Activated CD4-positive, alpha-beta memory T cell treated with anti-CD3 and anti-CD28 coated beads for 36 hours (primary cell): ENCODE measurements at regions of chr4 and their contacts with region 1.

Region 1: DNA sequence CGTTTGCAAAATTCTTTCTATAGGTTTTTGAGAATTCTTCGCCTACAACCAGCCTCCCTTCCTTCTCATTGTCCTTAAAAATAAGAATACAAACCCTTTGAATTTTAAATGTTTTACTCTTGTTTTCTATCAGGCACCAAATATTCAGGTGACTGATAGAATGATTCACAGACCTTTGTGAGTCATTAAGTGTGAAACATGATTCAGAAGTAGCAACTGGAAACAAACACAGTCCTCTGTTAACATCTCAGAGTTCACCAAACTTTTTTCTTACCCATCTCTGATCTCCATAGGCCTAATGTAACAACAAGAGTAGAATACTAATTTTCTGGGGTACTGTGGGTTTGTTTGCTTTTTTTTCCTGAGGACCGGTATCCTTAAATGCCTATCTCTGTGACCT is 63.4 kb upstream of the MAB21L2 start:
- DNase-seq: no peak
- H3K4me3 Mint-ChIP-seq: no peak overlapping the region
- H3K27ac Mint-ChIP-seq: no peak overlapping the region
- H3K4me1 Mint-ChIP-seq: peaks cover 17% of the 10 kb centered on the region
- H3K27me3 Mint-ChIP-seq: no peaks in the 10 kb centered on the region

Region 2: DNA sequence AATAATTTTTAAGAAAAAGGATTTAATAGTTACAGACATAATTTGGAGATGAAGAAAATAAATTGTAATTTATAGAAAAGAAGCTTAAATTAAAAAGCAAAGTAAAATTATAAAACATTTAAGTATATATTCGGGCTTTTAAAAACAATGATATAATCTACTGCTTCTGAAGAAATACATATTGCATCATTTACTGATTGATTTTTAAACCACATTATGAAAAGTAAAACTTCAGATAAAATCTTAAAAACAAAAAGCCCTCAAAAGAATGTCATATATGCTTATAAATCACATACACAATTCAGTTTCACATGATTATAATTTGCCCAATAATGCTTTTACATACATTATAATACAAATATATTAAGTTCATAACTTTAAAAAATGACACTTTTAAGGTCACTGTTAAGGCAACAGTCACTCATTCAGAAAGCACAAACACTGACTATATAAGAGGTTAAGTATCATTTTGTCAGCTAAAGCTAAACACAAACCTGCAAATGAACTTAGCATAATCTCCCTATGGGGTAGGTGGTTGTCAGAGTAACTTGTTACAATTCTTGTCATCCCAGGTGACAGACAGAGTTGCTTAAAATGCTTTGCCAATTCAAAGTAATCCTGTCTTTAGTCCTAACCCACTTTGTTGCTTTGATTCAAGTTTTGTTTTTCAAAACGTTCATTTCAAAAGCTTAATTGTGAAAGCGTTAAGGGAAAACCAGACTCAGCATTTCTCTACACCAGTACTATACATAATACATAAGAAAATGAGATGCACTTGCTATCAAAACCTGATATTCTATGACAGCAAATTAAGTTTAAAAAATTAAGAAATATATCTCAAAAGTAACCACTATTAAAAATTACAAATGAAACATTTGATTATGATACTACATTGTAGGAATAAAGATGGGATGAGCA is 27.2 kb before region 1 on chr4:
- CTCF ChIA-PET with region 1: no interaction called
- POLR2A ChIA-PET with region 1: no interaction called
- intact Hi-C with region 1: loop called (anchors 1 kb)
- DNase-seq: no peak
- H3K4me3 Mint-ChIP-seq: no peak overlapping the region
- H3K27ac Mint-ChIP-seq: no peak overlapping the region
- H3K4me1 Mint-ChIP-seq: peaks cover 11% of the 10 kb centered on the region
- H3K27me3 Mint-ChIP-seq: no peaks in the 10 kb centered on the region